ENCODE measurements at regions of chr16 and their contacts with region 1.

Region 1: GRCh38 chr16:81349996-81350618 is 35.3 kb downstream of the GAN start:
- DNase-seq: no peak
- ATAC-seq: no peak
- H3K4me3 ChIP-seq: no peak overlapping the region
- H3K4me3 Mint-ChIP-seq: no peak overlapping the region
- H3K27ac ChIP-seq: no peak overlapping the region
- H3K27ac Mint-ChIP-seq: no peak overlapping the region
- H3K4me1 ChIP-seq: no peaks in the 10 kb centered on the region
- H3K4me1 Mint-ChIP-seq: peaks cover 0 to 5% (median 1%) of the 10 kb centered on the region in 7 donors
- H3K27me3 ChIP-seq: no peaks in the 10 kb centered on the region
- H3K27me3 Mint-ChIP-seq: no peaks in the 10 kb centered on the region

Region 2: GRCh38 chr16:81261049-81261648 is 89.0 kb before region 1 on chr16:
- CTCF ChIA-PET with region 1: no interaction called
- POLR2A ChIA-PET with region 1: no interaction called
- intact Hi-C with region 1: loop called in 1 of 2 experiments (anchors 5 kb)
- DNase-seq: peak in 4 of 9 donors; percentile 2 to 16 (median 6)
- ATAC-seq: peak; percentile 31
- H3K4me3 ChIP-seq: no peak overlapping the region
- H3K4me3 Mint-ChIP-seq: no peak overlapping the region
- H3K27ac ChIP-seq: no peak overlapping the region
- H3K27ac Mint-ChIP-seq: no peak overlapping the region
- H3K4me1 ChIP-seq: no peaks in the 10 kb centered on the region
- H3K4me1 Mint-ChIP-seq: peaks cover 0 to 4% (median 0%) of the 10 kb centered on the region in 7 donors
- H3K27me3 ChIP-seq: no peaks in the 10 kb centered on the region
- H3K27me3 Mint-ChIP-seq: peaks cover 0 to 11% (median 5%) of the 10 kb centered on the region in 5 donors

Region 3: GRCh38 chr16:81360135-81360534 is 10.0 kb after region 1 on chr16:
- CTCF ChIA-PET with region 1: no interaction called
- POLR2A ChIA-PET with region 1: no interaction called
- intact Hi-C with region 1: no loop called
- DNase-seq: no peak
- ATAC-seq: no peak
- H3K4me3 ChIP-seq: no peak overlapping the region
- H3K4me3 Mint-ChIP-seq: no peak overlapping the region
- H3K27ac ChIP-seq: no peak overlapping the region
- H3K27ac Mint-ChIP-seq: peak overlapping the region in 1 of 9 donors; percentile 38
- H3K4me1 ChIP-seq: no peaks in the 10 kb centered on the region
- H3K4me1 Mint-ChIP-seq: no peaks in the 10 kb centered on the region
- H3K27me3 ChIP-seq: no peaks in the 10 kb centered on the region
- H3K27me3 Mint-ChIP-seq: no peaks in the 10 kb centered on the region

Region 4: GRCh38 chr16:81403616-81404373 is 53.7 kb after region 1 on chr16:
- CTCF ChIA-PET with region 1: no interaction called
- POLR2A ChIA-PET with region 1: no interaction called
- intact Hi-C with region 1: no loop called
- DNase-seq: peak; percentile 45 to 86 (median 68)
- ATAC-seq: peak; percentile 96
- H3K4me3 ChIP-seq: peak overlapping the region; percentile 34
- H3K4me3 Mint-ChIP-seq: peak overlapping the region in 5 of 10 donors; percentile 25 to 43 (median 32)
- H3K27ac ChIP-seq: no peak overlapping the region
- H3K27ac Mint-ChIP-seq: peak overlapping the region in 1 of 9 donors; percentile 18
- H3K4me1 ChIP-seq: no peaks in the 10 kb centered on the region
- H3K4me1 Mint-ChIP-seq: peaks cover 0 to 4% (median 0%) of the 10 kb centered on the region in 7 donors
- H3K27me3 ChIP-seq: no peaks in the 10 kb centered on the region
- H3K27me3 Mint-ChIP-seq: peaks cover 0 to 6% (median 0%) of the 10 kb centered on the region in 5 donors

Measured in naive thymus-derived CD4-positive, alpha-beta T cell (primary cell).